Activated B cell treated with CpG ODN at 0.5 μM for 24 hours (primary cell): ENCODE measurements at regions of chr1 and their contacts with region 1.

Region 1: DNA sequence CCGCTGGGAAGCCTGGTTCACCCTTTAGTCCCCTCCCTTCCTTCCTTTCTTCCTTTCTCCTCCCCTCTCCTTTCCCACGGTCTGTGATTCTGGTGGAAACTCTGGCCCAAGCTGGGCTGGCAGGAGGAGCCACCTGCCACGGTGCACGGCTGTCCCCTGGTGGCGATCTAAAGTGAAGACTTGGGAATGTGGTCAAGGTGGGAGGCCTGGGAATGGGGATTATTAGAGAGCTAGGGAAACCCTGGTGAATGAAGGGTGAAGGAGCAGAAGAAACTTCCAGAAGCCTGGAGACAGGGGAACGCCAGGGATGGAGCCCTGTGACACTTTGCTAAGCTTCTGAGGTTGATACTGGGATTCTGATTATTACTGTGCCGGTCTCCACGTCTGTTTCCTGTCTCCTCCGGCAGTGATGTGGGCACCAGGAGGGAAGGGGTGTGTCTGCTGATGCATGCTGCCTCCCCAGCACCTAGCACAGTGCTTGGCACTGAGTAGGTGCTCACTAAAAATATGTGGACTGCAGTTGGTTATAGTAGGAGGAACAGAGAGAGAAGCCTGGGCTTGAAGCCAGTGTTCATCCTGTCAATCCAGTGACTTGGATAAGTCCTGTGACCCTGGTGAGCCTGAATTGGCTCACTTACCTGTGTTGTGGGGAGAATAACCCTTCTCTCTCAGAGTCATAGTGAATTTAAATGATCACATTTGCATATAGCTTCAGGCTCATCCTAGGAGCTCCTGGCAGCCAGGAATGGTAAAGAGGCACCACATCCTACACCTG is 71.2 kb upstream of the NBPF3 start:
- DNase-seq: peak; percentile 52
- ATAC-seq: peak; percentile 45
- H3K4me3 Mint-ChIP-seq: no peak overlapping the region
- H3K27ac Mint-ChIP-seq: no peak overlapping the region
- H3K4me1 Mint-ChIP-seq: peaks cover 26% of the 10 kb centered on the region
- H3K27me3 Mint-ChIP-seq: no peaks in the 10 kb centered on the region
- CTCF ChIP-seq: peak; percentile 57

Region 2: GRCh38 chr1:21216835-21217811 is 151.6 kb before region 1 on chr1:
- CTCF ChIA-PET with region 1: interaction called, 46 read pairs
- POLR2A ChIA-PET with region 1: no interaction called
- intact Hi-C with region 1: loop called (anchors 1 kb)
- DNase-seq: peak; percentile 45
- ATAC-seq: peak; percentile 76
- H3K4me3 Mint-ChIP-seq: no peak overlapping the region
- H3K27ac Mint-ChIP-seq: peak overlapping the region; percentile 53
- H3K4me1 Mint-ChIP-seq: peaks cover 4% of the 10 kb centered on the region
- H3K27me3 Mint-ChIP-seq: no peaks in the 10 kb centered on the region
- CTCF ChIP-seq: peak; percentile 15

Region 3: GRCh38 chr1:21244986-21245687 is 123.6 kb before region 1 on chr1:
- CTCF ChIA-PET with region 1: interaction called, 18 read pairs
- POLR2A ChIA-PET with region 1: no interaction called
- intact Hi-C with region 1: no loop called
- DNase-seq: no peak
- ATAC-seq: peak; percentile 28
- H3K4me3 Mint-ChIP-seq: no peak overlapping the region
- H3K27ac Mint-ChIP-seq: no peak overlapping the region
- H3K4me1 Mint-ChIP-seq: no peaks in the 10 kb centered on the region
- H3K27me3 Mint-ChIP-seq: no peaks in the 10 kb centered on the region
- CTCF ChIP-seq: no peak

Region 4: DNA sequence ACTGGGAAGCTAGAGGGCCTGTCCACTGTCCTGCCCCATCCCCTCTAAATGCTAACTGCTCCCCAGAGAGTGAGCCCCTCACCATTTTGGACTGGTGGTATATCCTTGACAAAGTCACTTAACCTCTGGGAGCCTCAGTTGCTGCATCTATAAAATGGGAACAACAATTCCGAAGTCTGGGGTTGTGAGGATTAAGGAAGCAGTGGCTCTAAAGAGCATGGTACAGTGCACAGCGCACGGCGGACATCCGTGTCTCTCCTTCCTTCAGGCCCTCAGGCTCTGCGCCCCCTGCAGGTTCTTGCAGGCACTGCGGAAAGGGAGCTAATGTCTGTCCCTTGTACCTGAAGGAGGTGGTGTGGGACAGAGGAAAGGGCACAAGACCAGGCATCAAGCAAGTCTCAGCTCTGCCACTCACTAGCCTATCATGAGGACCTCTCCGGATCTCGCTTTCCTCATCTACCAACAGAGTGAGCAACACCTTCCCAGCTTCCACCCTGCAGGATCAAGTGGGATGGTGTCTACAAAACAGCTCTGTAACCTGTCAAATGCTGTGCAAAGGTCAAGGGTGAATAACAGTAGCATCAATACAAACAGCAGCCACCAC is 98.5 kb before region 1 on chr1:
- CTCF ChIA-PET with region 1: interaction called, 144 read pairs
- POLR2A ChIA-PET with region 1: interaction called, 4 read pairs
- intact Hi-C with region 1: loop called (anchors 1 kb)
- DNase-seq: peak; percentile 77
- ATAC-seq: peak; percentile 95
- H3K4me3 Mint-ChIP-seq: no peak overlapping the region
- H3K27ac Mint-ChIP-seq: peak overlapping the region; percentile 5
- H3K4me1 Mint-ChIP-seq: peaks cover 15% of the 10 kb centered on the region
- H3K27me3 Mint-ChIP-seq: no peaks in the 10 kb centered on the region
- CTCF ChIP-seq: no peak

Region 5: GRCh38 chr1:21324368-21325141 is 44.1 kb before region 1 on chr1:
- CTCF ChIA-PET with region 1: interaction called, 11 read pairs
- POLR2A ChIA-PET with region 1: interaction called, 5 read pairs
- intact Hi-C with region 1: no loop called
- DNase-seq: peak; percentile 51
- ATAC-seq: peak; percentile 71
- H3K4me3 Mint-ChIP-seq: peak overlapping the region; percentile 72
- H3K27ac Mint-ChIP-seq: peak overlapping the region; percentile 90
- H3K4me1 Mint-ChIP-seq: peaks cover 87% of the 10 kb centered on the region
- H3K27me3 Mint-ChIP-seq: no peaks in the 10 kb centered on the region
- CTCF ChIP-seq: no peak

Region 6: GRCh38 chr1:21352586-21352985 is 16.1 kb before region 1 on chr1:
- CTCF ChIA-PET with region 1: interaction called, 16 read pairs
- POLR2A ChIA-PET with region 1: interaction called, 3 read pairs
- intact Hi-C with region 1: no loop called
- DNase-seq: no peak
- ATAC-seq: no peak
- H3K4me3 Mint-ChIP-seq: no peak overlapping the region
- H3K27ac Mint-ChIP-seq: no peak overlapping the region
- H3K4me1 Mint-ChIP-seq: no peaks in the 10 kb centered on the region
- H3K27me3 Mint-ChIP-seq: no peaks in the 10 kb centered on the region
- CTCF ChIP-seq: no peak

Region 7: GRCh38 chr1:21659099-21659923 is 290.6 kb after region 1 on chr1:
- CTCF ChIA-PET with region 1: interaction called, 6 read pairs
- POLR2A ChIA-PET with region 1: no interaction called
- intact Hi-C with region 1: loop called (anchors 1 kb)
- DNase-seq: peak; percentile 77
- ATAC-seq: peak; percentile 97
- H3K4me3 Mint-ChIP-seq: peak overlapping the region; percentile 32
- H3K27ac Mint-ChIP-seq: no peak overlapping the region
- H3K4me1 Mint-ChIP-seq: peaks cover 11% of the 10 kb centered on the region
- H3K27me3 Mint-ChIP-seq: peaks cover 25% of the 10 kb centered on the region
- CTCF ChIP-seq: no peak